ENCODE measurements at regions of chr11 and their contacts with region 1.

Region 1: DNA sequence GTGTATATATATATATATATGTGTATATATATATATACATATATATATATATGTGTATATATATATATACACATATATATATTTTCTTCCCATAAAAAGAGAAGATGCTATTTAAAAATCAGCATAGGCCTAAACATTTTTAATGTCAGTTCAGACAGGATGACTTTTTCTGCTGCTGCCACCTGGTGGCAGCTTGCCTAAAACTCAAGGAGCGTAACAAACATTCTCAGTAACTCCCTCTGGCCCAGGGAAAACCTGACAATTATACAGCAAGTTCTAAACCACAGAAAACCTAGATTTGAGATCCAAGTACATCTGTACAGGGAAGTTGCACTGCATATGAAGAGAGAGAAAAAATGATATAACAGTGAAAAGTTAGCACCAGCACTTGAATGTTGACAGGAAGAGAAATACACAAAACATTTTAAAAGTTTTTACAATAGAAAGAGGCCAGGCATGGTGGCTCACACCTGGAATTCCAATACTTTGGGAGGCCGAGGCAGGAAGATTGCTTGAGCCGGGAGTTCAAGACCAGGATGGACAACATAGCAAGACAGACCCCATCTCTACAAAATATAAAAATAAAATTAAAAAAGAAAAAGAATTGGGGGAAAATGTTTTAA is 16.6 kb downstream of the OR8A1 start:
- DNase-seq: peak; percentile 68 to 89 (median 72)
- ATAC-seq: peak in 1 of 2 donors; percentile 58
- H3K4me3 ChIP-seq: no peak overlapping the region
- H3K27ac ChIP-seq: no peak overlapping the region
- H3K4me1 ChIP-seq: no peaks in the 10 kb centered on the region
- H3K27me3 ChIP-seq: no peaks in the 10 kb centered on the region

Region 2: DNA sequence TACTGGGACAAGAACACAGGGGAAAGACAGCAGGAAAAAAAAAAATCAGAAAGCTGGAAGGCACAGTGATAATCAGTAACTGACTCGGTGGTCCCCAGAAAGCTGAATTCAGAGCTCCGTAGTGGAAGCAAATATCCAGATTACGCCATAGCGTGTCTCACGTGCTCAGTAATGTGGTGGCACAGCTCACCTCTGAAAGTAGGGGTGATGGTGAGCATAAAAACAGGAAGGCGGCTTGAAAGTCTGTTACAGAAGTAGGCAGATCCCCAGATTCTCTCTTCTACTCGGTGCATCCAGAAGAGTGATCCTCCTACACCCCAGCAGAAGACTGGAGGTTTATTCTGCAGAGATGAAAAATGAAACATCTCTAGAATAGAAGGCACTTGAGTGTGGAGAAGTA is 176.4 kb before region 1 on chr11:
- intact Hi-C with region 1: loop called (anchors 2 to 5 kb)
- DNase-seq: no peak
- ATAC-seq: no peak
- H3K4me3 ChIP-seq: no peak overlapping the region
- H3K27ac ChIP-seq: no peak overlapping the region
- H3K4me1 ChIP-seq: no peaks in the 10 kb centered on the region
- H3K27me3 ChIP-seq: no peaks in the 10 kb centered on the region

Region 3: DNA sequence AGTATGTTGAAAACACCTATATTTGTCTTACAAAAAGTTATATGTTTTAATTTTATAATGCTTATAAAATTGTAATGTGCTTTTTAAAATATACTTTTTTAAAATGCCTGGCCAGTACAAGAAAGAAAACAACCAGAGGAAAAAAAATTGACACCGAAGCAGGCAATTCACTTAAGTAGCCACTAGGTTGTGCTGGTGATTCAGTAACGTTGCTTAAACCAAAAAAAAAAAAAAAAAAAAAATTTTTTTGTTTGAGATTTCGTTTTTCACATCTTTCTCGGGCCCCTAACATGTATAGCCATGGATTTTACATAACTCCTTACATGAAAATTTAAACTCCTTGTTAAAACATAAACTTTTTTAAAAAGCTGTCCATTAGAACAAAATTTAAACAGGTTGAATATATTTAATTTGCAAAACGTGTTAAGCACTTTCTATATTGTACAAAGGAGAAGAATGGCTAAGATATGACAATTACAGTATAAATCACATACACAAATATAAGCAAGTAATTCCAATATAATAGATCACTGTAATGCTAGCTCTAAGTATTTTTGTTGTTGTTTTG is 170.9 kb before region 1 on chr11:
- intact Hi-C with region 1: loop called (anchors 2 to 5 kb)
- DNase-seq: no peak
- ATAC-seq: no peak
- H3K4me3 ChIP-seq: no peak overlapping the region
- H3K27ac ChIP-seq: no peak overlapping the region
- H3K4me1 ChIP-seq: no peaks in the 10 kb centered on the region
- H3K27me3 ChIP-seq: no peaks in the 10 kb centered on the region

Region 4: DNA sequence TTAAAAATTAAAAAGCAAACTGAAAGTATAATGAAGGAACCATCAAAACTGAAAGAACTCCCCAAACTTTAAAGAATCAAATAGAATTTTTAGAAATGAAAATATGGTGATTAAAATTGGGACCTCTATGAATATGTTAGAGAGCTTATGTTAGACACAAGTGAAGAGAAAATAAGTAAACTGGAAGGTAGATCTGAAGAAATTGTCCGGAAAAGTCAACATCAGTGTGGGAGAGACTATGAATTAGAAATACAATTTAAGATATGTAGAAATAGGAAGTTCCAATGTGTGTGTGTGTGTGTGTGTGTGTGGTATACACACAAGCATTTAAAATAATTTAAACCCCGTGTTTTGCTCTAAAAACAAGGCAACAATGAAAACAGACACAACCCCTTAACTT is 156.8 kb before region 1 on chr11:
- intact Hi-C with region 1: no loop called
- DNase-seq: no peak
- ATAC-seq: no peak
- H3K4me3 ChIP-seq: no peak overlapping the region
- H3K27ac ChIP-seq: no peak overlapping the region
- H3K4me1 ChIP-seq: no peaks in the 10 kb centered on the region
- H3K27me3 ChIP-seq: no peaks in the 10 kb centered on the region